GM10248 (cell line): ENCODE measurements at regions of chr6 and their contacts with region 1.

Region 1: DNA sequence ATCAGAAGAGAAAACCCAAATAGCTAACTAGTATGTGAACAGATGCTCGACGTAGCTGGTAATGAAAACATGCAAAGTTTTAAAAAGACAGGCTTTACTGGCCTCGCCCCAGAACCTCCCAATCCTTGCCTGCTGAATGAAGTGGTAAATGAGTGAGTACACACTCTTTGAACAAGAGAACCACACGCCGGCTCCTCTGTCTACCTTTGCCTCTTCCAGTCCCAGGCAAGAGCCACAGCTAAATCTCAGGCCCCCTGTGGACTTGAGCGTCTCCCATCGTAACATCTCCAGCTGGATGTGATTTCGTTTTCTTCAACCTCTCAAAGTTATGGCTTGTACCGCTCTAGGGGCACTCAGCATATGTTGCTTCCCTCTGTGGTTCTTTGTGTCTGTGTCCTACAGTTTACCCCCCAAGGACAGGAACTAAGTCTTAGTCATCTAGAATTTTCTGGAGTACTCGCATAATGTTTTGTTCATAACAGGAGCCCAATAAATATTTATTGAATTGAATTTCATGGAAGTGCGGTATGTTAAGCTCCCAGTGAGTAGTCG is 153.2 kb upstream of the TAB2 start:
- DNase-seq: no peak
- CTCF ChIP-seq: no peak

Region 2: GRCh38 chr6:149150801-149151398 is 13.4 kb before region 1 on chr6:
- CTCF ChIA-PET with region 1: interaction called, 24 read pairs
- POLR2A ChIA-PET with region 1: no interaction called
- DNase-seq: no peak
- CTCF ChIP-seq: no peak